ENCODE measurements at regions of chrX and their contacts with region 1.

Region 1: DNA sequence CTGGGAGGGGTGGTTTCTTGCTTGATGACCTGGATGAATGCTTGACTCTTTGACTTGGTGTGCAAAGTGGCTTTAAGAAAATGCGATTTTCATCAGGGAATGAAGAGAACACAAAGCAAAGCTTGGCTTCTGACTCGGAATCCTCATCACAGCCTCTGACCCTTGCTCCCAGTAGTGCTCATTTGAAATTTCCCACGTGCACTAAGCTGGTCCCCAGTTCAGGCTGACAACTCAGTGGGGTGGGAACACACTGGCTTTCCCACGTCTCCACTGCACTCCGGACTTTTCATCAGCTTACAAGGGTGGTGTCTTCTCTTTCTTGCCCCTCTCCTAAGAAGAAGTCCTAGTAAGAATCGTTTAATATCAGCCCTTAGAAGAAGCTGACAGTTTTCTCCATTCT is 53.3 kb downstream of the HCCS start:
- DNase-seq: no peak
- H3K4me3 ChIP-seq: no peak overlapping the region
- H3K27ac ChIP-seq: no peak overlapping the region
- H3K4me1 ChIP-seq: no peaks in the 10 kb centered on the region
- H3K27me3 ChIP-seq: no peaks in the 10 kb centered on the region
- CTCF ChIP-seq: no peak
- POLR2A ChIP-seq: no peak

Region 2: DNA sequence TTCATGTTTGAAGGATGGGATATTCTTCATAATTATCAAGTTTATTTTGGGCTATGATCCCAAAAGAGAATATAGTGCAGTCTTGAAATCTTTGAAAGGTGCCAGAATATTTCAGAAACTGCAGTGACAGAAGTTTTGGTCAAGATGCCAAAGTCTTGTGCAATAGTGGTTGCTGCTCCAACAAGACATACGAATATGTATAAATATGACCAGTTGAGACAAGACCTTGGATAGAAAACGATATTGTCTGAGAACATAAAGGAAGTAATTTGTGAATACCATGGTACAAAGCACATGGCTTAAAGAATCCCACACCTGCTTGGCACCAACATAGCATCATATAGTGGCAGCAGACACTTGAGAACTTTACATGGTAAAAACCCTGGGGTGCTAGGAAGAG is 80.2 kb after region 1 on chrX:
- intact Hi-C with region 1: loop called (anchors 10 kb)
- DNase-seq: peak; percentile 55
- H3K4me3 ChIP-seq: no peak overlapping the region
- H3K27ac ChIP-seq: peak overlapping the region; percentile 28 to 51
- H3K4me1 ChIP-seq: no peaks in the 10 kb centered on the region
- H3K27me3 ChIP-seq: no peaks in the 10 kb centered on the region
- CTCF ChIP-seq: no peak
- POLR2A ChIP-seq: no peak

Measured in prostate gland (tissue), 2 donors.